ENCODE measurements at regions of chr5 and their contacts with region 1.

Region 1: DNA sequence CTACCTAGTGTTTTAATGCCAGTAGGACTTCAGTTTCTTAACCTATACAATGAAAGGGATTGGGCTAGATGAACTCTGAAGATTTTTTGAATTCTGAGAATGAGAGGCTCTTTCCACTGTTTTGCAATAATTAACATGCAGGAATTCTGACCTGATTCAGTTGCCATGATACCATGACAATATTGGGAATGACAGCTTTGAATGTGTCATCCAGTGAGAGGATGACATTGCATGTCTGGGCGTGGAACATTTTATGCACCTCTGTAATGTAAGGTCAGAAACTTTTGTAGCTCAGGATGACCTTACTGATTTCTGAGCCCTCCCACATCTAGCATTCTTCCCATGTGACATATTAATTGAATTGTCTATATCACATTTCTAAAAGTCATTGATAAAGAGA is 30.6 kb upstream of the SPINK5 start:
- DNase-seq: no peak
- H3K4me3 ChIP-seq: no peak overlapping the region
- CTCF ChIP-seq: no peak
- POLR2A ChIP-seq: no peak

Region 2: GRCh38 chr5:148012806-148013205 is 20.3 kb before region 1 on chr5:
- intact Hi-C with region 1: loop called (anchors 1 kb)
- DNase-seq: no peak
- H3K4me3 ChIP-seq: no peak overlapping the region
- CTCF ChIP-seq: no peak
- POLR2A ChIP-seq: no peak